ENCODE measurements at regions of chr11 and their contacts with region 1.

Region 1: DNA sequence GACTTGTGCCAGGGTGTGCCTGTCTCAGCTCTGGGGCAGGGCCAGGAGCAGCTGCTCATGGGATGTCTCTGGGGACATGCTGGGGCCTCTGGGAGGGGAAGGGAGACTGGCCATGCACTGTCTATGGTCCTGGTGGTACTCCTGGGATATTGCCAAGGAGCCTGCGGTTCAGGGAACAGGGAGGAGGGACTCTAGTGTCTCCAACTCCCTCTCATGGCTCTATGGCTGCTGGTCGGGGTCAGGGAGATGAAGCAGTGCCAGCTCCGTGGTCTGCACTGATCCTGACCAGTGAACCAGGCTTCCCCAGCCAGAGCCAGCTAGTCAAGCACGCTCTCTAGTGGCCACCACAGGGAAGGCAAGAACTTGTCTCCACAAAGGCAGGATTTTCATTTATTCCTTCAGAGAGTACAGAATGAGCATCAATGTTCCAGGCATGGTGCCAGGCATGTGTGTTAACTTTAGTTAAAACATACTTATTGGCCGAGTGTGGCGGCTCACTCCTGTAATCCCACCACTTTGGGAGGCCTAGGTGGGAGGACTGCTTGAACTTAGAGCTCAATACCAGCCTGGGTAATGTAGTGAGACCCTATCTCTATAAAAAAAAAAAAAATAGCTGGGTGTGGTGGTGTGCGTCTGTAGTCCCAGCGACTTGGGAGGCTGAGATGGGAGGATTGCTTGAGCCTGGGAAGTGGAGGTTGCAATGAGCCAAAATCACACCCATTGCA is 2.5 kb upstream of the BEST1 start:
- DNase-seq: peak; percentile 87
- H3K4me3 ChIP-seq: no peak overlapping the region
- H3K27ac ChIP-seq: no peak overlapping the region; a peak in 1 of 4 replicates
- H3K4me1 ChIP-seq: peaks cover 11 to 18% of the 10 kb centered on the region in 2 experiments; a peak in 2 of 4 replicates
- H3K27me3 ChIP-seq: no peaks in the 10 kb centered on the region
- CTCF ChIP-seq: peak; percentile 95
- EP300 ChIP-seq: no peak
- RAD21 ChIP-seq: peak; percentile 100

Region 2: GRCh38 chr11:61816736-61817455 is 130.8 kb before region 1 on chr11 and contains the start of gene FADS1:
- CTCF ChIA-PET with region 1: interaction called, 7 read pairs
- POLR2A ChIA-PET with region 1: interaction called, 12 read pairs
- DNase-seq: peak; percentile 95
- H3K4me3 ChIP-seq: peak within 1 kb of the TSS; percentile 83 to 87
- H3K27ac ChIP-seq: peak within 1 kb of the TSS; percentile 88 to 98
- H3K4me1 ChIP-seq: peaks cover 17 to 19% of the 10 kb centered on the region in 2 experiments; a peak in 3 of 4 replicates
- H3K27me3 ChIP-seq: no peaks in the 10 kb centered on the region
- CTCF ChIP-seq: peak; percentile 63
- EP300 ChIP-seq: no peak
- RAD21 ChIP-seq: peak; percentile 36
- polyA plus RNA-seq, gene FADS1: 20.6 and 26.4 TPM in 2 replicates

Region 3: DNA sequence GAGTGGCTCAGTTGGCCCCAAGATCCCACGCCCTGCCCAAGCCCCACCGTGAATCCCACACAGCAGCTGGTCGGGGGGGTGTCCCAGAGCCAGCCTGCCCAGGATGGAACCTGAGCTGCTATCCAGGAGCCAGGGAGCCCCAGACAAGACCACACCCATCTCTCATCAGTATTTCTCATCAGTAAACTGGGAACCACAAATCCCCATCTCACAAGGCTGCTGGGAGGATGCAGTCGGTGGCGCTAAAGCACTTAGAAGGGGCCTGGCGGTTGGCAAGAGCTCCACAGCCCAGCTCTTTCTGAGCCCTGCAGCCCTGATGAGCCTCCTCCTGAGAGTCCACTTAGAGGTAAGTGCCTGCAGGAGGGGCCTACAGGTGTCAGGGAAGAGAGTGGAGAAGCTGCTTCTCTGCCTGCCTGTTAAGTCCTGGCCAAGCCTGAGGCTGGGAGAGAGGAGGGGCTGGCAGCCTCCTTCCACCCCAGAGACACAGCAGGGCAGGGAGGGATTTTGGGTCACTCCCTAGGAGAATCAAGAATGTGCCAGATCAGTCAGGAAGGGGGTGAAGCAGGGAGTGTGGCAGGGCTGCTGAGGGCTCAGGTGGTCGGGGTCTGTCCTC is 62.4 kb before region 1 on chr11:
- CTCF ChIA-PET with region 1: interaction called, 34 read pairs
- POLR2A ChIA-PET with region 1: no interaction called
- DNase-seq: no peak
- H3K4me3 ChIP-seq: no peak overlapping the region
- H3K27ac ChIP-seq: no peak overlapping the region
- H3K4me1 ChIP-seq: peaks cover 7 to 11% of the 10 kb centered on the region in 2 experiments; a peak in 3 of 4 replicates
- H3K27me3 ChIP-seq: no peaks in the 10 kb centered on the region
- CTCF ChIP-seq: no peak
- EP300 ChIP-seq: no peak
- RAD21 ChIP-seq: no peak

Region 4: GRCh38 chr11:61908730-61909315 is 38.8 kb before region 1 on chr11:
- CTCF ChIA-PET with region 1: interaction called, 543 read pairs
- POLR2A ChIA-PET with region 1: interaction called, 4 read pairs
- DNase-seq: no peak
- H3K4me3 ChIP-seq: no peak overlapping the region
- H3K27ac ChIP-seq: no peak overlapping the region
- H3K4me1 ChIP-seq: no peaks in the 10 kb centered on the region
- H3K27me3 ChIP-seq: no peaks in the 10 kb centered on the region
- CTCF ChIP-seq: no peak
- EP300 ChIP-seq: no peak
- RAD21 ChIP-seq: no peak

Region 5: GRCh38 chr11:61928606-61929005 is 19.0 kb before region 1 on chr11:
- CTCF ChIA-PET with region 1: interaction called, 61 read pairs
- POLR2A ChIA-PET with region 1: interaction called, 8 read pairs
- DNase-seq: no peak
- H3K4me3 ChIP-seq: no peak overlapping the region
- H3K27ac ChIP-seq: no peak overlapping the region
- H3K4me1 ChIP-seq: peaks cover 4 to 8% of the 10 kb centered on the region in 2 experiments; a peak in 3 of 4 replicates
- H3K27me3 ChIP-seq: no peaks in the 10 kb centered on the region
- CTCF ChIP-seq: no peak
- EP300 ChIP-seq: no peak
- RAD21 ChIP-seq: no peak

Region 6: DNA sequence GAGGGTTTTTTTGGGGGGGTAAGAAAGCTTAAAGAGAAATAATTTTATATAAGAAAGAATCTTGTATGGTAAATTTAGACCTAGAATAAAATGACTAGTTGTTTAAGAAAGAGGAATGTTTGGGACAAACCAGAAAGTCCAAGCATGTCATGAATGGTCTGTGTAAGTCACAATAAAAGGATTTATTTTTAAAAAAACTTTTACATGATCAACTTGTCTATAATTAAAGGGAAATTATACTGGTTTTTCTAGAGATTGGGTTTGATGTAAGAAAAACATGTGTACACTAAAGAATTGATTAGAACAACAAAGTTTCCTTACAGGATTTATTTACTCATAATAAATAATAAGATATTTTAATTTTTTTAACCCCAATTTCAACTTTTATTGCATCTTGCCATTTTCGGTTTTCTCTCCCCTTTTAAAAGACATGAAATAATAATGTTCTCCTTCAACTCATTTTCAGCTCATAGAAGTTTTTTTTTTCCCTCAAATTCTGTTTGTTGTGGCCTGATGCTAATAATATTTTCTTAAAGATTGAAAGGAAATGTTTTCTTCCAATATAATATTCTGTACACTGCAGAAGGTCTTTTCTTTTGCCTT is 140.8 kb after region 1 on chr11:
- CTCF ChIA-PET with region 1: interaction called, 142 read pairs
- POLR2A ChIA-PET with region 1: no interaction called
- DNase-seq: no peak
- H3K4me3 ChIP-seq: no peak overlapping the region
- H3K27ac ChIP-seq: no peak overlapping the region
- H3K4me1 ChIP-seq: no peaks in the 10 kb centered on the region
- H3K27me3 ChIP-seq: no peaks in the 10 kb centered on the region
- CTCF ChIP-seq: no peak
- EP300 ChIP-seq: no peak
- RAD21 ChIP-seq: no peak

Measured in SK-N-SH (cell line).